ENCODE measurements at regions of chr12 and their contacts with region 1.

Region 1: DNA sequence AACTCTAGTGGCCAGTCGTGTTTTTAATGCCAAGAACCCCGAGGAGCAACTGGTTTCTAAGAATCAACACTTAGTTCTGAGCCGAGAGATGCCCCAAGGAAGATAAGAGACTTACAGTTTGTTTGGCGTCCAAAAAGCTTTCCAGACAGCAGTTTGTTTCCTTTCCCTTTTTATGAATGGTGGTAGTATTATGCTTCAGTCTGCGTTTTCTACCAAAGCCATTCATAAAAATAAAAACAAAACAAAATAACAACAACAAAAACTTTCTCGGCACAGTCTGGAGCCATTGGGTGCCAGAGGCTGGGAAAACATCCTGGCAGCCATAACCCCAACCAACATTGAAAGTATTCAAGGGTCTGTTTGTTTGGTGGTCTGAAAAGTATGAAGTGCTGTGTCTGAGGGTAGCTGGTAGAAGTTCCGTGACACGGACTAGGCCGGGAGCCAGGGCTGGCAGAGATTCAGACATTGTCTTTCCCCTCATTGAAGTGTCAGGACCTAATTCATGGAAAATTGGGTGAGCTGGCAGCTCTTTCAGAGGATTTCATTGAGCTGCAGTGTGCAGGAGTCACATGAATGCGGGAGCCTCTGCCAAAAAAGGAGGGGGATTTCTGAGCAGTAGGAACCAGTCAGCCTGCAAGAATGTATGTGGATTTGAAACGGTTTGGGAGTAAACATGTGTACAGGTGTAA is 124.2 kb downstream of the HMGA2 start:
- DNase-seq: peak in 1 of 2 experiments; percentile 81
- H3K4me3 ChIP-seq: no peak overlapping the region
- H3K27ac ChIP-seq: peak overlapping the region; percentile 18; the same call in 1 of the 2 replicates
- H3K4me1 ChIP-seq: peaks cover 5% of the 10 kb centered on the region; the same call in 1 of the 2 replicates
- H3K27me3 ChIP-seq: no peaks in the 10 kb centered on the region
- CTCF ChIP-seq: no peak

Region 2: DNA sequence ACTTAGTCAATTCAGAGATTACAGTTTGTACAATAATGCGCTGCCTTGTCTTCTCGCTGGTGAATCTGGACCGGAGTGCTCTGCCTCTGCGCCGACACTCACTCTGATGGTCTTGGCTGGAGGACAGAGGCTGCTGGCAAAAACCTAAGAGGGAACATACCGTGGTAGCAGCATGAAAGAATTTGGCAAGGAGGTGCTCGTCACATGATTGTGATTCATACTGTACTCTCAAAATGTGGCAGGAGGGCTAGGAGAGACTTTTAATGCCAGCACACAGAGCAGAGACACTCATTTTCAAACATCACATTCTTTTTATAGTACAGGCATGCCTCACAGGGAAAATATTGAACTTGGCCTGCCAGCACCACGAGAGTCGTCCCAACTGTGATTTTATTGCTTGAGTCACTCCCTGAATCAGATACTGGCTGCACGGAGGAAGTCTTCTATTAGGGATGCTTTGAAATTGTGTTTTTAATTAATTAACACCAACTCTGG is 56.4 kb before region 1 on chr12:
- CTCF ChIA-PET with region 1: no interaction called
- POLR2A ChIA-PET with region 1: no interaction called
- intact Hi-C with region 1: loop called (anchors 1 kb)
- DNase-seq: peak; percentile 40 to 59
- H3K4me3 ChIP-seq: no peak overlapping the region
- H3K27ac ChIP-seq: peak overlapping the region; percentile 23; the same call in 1 of the 2 replicates
- H3K4me1 ChIP-seq: peaks cover 34% of the 10 kb centered on the region
- H3K27me3 ChIP-seq: no peaks in the 10 kb centered on the region
- CTCF ChIP-seq: no peak

Region 3: GRCh38 chr12:66072566-66072965 is 124.1 kb after region 1 on chr12:
- CTCF ChIA-PET with region 1: no interaction called
- POLR2A ChIA-PET with region 1: no interaction called
- intact Hi-C with region 1: no loop called
- DNase-seq: no peak
- H3K4me3 ChIP-seq: no peak overlapping the region
- H3K27ac ChIP-seq: no peak overlapping the region
- H3K4me1 ChIP-seq: no peaks in the 10 kb centered on the region
- H3K27me3 ChIP-seq: no peaks in the 10 kb centered on the region
- CTCF ChIP-seq: no peak

Measured in PC-9 (cell line).